ENCODE measurements at regions of chr10 and their contacts with region 1.

Region 1: GRCh38 chr10:49194212-49194920 is 6.2 kb upstream of the TMEM273 start:
- DNase-seq: peak; percentile 79
- H3K4me3 ChIP-seq: peak overlapping the region in 1 of 3 experiments; percentile 18
- H3K27ac ChIP-seq: peak overlapping the region; percentile 90
- H3K4me1 ChIP-seq: peaks cover 17% of the 10 kb centered on the region
- H3K27me3 ChIP-seq: no peaks in the 10 kb centered on the region
- CTCF ChIP-seq: no peak
- POLR2A ChIP-seq: no peak

Region 2: GRCh38 chr10:48946891-48947500 is 247.4 kb before region 1 on chr10:
- CTCF ChIA-PET with region 1: no interaction called
- POLR2A ChIA-PET with region 1: no interaction called
- dilution Hi-C with region 1: no loop called
- intact Hi-C with region 1: loop called (anchors 5 kb)
- DNase-seq: peak; percentile 91
- H3K4me3 ChIP-seq: no peak overlapping the region
- H3K27ac ChIP-seq: peak overlapping the region; percentile 74
- H3K4me1 ChIP-seq: peaks cover 32% of the 10 kb centered on the region
- H3K27me3 ChIP-seq: no peaks in the 10 kb centered on the region
- CTCF ChIP-seq: no peak
- POLR2A ChIP-seq: no peak

Measured in endothelial cell of umbilical vein (primary cell).